CD14-positive monocyte (primary cell): ENCODE measurements at regions of chr20 and their contacts with region 1.

Region 1: GRCh38 chr20:37384683-37385174 is 38.8 kb downstream of the SRC start:
- DNase-seq: peak; percentile 73 to 81 (median 80)
- H3K4me3 ChIP-seq: peak overlapping the region; percentile 20 to 68 (median 24)
- H3K4me3 Mint-ChIP-seq: peak overlapping the region; percentile 66 to 84
- H3K27ac ChIP-seq: peak overlapping the region in 1 of 2 donors; percentile 78
- H3K27ac Mint-ChIP-seq: peak overlapping the region in 5 of 7 donors; percentile 51 to 89 (median 72)
- H3K4me1 ChIP-seq: peaks cover 35 to 44% of the 10 kb centered on the region in 2 donors
- H3K4me1 Mint-ChIP-seq: peaks cover 40% of the 10 kb centered on the region
- H3K27me3 ChIP-seq: no peaks in the 10 kb centered on the region
- H3K27me3 Mint-ChIP-seq: peaks cover 9 to 18% (median 12%) of the 10 kb centered on the region in 3 donors
- CTCF ChIP-seq: peak; percentile 93

Region 2: DNA sequence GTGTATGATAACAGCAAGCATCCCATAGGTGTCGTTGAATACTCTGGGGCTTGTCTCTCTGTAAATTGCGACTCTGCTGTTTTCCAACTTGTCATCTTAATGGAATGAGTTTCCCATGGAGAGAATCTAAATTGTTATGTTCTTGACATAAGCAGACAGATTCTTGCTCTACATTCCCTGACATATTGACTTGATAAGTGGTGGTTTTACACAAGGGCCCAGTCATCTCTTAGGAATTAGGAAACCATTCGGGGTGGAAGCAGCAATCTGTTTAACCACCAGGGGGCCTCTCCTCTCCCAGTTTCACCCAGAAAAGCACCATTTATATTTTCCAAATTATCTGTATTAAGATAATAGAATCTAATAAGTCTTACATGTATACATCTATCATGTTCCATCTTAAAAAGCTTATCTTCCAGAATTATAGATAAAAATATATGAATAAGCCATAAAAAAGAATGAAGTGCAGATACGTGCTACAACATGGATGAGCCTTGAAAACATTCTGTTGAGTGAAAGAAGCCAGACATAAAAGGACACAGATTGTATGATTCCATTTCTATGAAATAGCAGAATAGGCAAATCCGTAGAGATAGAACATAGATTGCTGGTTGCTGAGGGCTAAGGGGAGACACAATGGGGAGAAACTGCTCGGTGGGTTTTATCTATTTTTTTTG is 182.3 kb before region 1 on chr20:
- intact Hi-C with region 1: loop called in 1 of 2 experiments (anchors 5 kb)
- DNase-seq: peak in 2 of 3 donors; percentile 41 to 50
- H3K4me3 ChIP-seq: no peak overlapping the region
- H3K4me3 Mint-ChIP-seq: no peak overlapping the region
- H3K27ac ChIP-seq: no peak overlapping the region
- H3K27ac Mint-ChIP-seq: peak overlapping the region in 3 of 7 donors; percentile 40 to 57 (median 57)
- H3K4me1 ChIP-seq: no peaks in the 10 kb centered on the region
- H3K4me1 Mint-ChIP-seq: no peaks in the 10 kb centered on the region
- H3K27me3 ChIP-seq: no peaks in the 10 kb centered on the region
- H3K27me3 Mint-ChIP-seq: no peaks in the 10 kb centered on the region
- CTCF ChIP-seq: peak; percentile 81

Region 3: GRCh38 chr20:37270576-37271420 is 113.9 kb before region 1 on chr20:
- intact Hi-C with region 1: loop called (anchors 1 to 2 kb)
- DNase-seq: peak; percentile 96 to 99 (median 98)
- H3K4me3 ChIP-seq: peak overlapping the region in 1 of 3 experiments; percentile 4
- H3K4me3 Mint-ChIP-seq: peak overlapping the region; percentile 9 to 48
- H3K27ac ChIP-seq: peak overlapping the region; percentile 97 to 100
- H3K27ac Mint-ChIP-seq: peak overlapping the region; percentile 96 to 100 (median 99)
- H3K4me1 ChIP-seq: peaks cover 66% of the 10 kb centered on the region in 2 donors
- H3K4me1 Mint-ChIP-seq: peaks cover 65% of the 10 kb centered on the region
- H3K27me3 ChIP-seq: no peaks in the 10 kb centered on the region
- H3K27me3 Mint-ChIP-seq: peaks cover 0 to 1% (median 0%) of the 10 kb centered on the region in 3 donors
- CTCF ChIP-seq: no peak

Region 4: DNA sequence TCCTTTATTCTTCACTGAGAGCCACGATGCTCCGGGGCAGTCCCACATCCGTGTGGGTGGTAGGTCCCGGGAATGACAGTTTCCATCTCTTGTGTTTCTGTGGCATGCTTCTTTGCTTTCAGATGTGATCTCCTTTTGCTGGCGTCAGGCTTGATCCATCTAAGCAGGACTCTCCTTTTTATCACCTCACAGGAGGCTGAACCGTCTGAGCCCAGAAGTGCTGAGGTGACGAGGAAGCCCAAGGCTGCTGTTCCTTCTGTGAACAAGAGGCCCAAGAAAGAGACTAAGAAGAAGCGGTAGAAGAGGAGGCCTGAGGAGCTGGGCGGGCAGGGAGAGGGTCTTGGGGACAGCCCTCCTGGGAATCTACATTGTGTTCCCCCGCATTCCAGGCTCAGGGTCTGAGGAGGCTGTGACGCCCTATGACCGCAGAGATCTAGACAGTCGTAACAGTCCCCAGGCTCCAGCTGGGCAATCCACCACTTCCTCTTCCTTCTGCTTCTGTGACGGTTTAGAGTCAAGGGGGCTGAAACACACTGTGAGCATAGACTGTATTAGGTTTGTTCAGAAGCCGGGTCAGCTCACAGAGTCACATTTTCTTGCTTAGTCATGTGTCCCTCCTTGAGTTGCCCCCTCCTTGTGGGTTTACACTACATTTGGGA is 68.5 kb before region 1 on chr20:
- intact Hi-C with region 1: loop called in 1 of 2 experiments (anchors 10 kb)
- DNase-seq: peak; percentile 85 to 93 (median 86)
- H3K4me3 ChIP-seq: no peak overlapping the region
- H3K4me3 Mint-ChIP-seq: peak overlapping the region; percentile 24 to 26
- H3K27ac ChIP-seq: peak overlapping the region; percentile 60 to 90
- H3K27ac Mint-ChIP-seq: peak overlapping the region; percentile 78 to 97 (median 92)
- H3K4me1 ChIP-seq: peaks cover 43 to 44% of the 10 kb centered on the region in 2 donors
- H3K4me1 Mint-ChIP-seq: peaks cover 56% of the 10 kb centered on the region
- H3K27me3 ChIP-seq: no peaks in the 10 kb centered on the region
- H3K27me3 Mint-ChIP-seq: peaks cover 0 to 2% (median 0%) of the 10 kb centered on the region in 3 donors
- CTCF ChIP-seq: no peak

Region 5: GRCh38 chr20:37527638-37528441 is 143.1 kb after region 1 on chr20 and contains the start of gene BLCAP:
- intact Hi-C with region 1: loop called in 1 of 2 experiments (anchors 5 kb)
- DNase-seq: peak; percentile 80 to 88 (median 85)
- H3K4me3 ChIP-seq: peak within 1 kb of the TSS; percentile 96 to 99 (median 97)
- H3K4me3 Mint-ChIP-seq: peak within 1 kb of the TSS; percentile 95
- H3K27ac ChIP-seq: peak within 1 kb of the TSS; percentile 82 to 100
- H3K27ac Mint-ChIP-seq: peak within 1 kb of the TSS; percentile 100
- H3K4me1 ChIP-seq: peaks cover 30 to 40% of the 10 kb centered on the region in 2 donors
- H3K4me1 Mint-ChIP-seq: peaks cover 57% of the 10 kb centered on the region
- H3K27me3 ChIP-seq: peaks cover 0 to 3% of the 10 kb centered on the region in 2 donors
- H3K27me3 Mint-ChIP-seq: peaks cover 6 to 7% (median 6%) of the 10 kb centered on the region in 3 donors
- CTCF ChIP-seq: no peak
- polyA plus RNA-seq, gene BLCAP: 45.3 to 54.5 (median 53.3) TPM

Region 6: DNA sequence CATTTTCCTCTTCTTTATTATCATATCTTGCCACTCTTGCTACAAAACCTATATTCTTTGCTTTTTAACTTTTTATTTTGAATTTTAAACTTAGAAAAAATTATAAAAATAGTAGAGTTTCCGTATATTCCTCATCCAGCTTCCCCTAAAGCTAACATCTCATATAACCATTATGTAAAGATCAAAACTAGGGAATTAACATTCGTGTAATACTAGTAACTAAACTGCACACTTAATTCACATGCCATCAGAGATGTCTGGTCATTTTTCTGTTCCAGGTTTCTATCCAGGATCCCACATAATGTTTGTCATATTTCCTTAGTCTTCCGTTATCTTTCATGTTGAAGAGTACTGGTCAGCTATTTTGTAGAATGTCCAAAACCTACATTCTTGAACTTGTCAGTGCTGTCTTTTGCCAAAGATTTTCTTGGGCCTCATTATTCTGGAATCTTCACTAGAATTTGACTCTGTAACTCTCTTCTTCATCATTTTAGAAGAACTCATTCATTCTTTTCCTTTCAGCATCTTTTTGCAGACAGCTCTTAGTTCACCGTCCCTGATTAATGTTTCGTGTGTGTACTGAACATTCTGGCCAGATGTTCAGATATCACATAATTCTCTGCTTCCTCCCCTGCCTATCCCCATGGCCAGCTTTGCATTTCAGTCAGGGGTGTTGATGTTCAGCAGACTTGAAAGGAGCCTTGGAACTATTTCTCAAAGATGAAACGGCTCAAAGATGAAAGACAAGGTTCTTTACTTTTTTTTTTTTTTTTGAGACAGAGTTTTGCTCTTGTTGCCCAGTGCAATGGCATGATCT is 318.5 kb after region 1 on chr20:
- intact Hi-C with region 1: no loop called
- DNase-seq: no peak
- H3K4me3 ChIP-seq: no peak overlapping the region
- H3K4me3 Mint-ChIP-seq: no peak overlapping the region
- H3K27ac ChIP-seq: no peak overlapping the region
- H3K27ac Mint-ChIP-seq: no peak overlapping the region
- H3K4me1 ChIP-seq: no peaks in the 10 kb centered on the region
- H3K4me1 Mint-ChIP-seq: peaks cover 4% of the 10 kb centered on the region
- H3K27me3 ChIP-seq: no peaks in the 10 kb centered on the region
- H3K27me3 Mint-ChIP-seq: peaks cover 0 to 2% (median 1%) of the 10 kb centered on the region in 3 donors
- CTCF ChIP-seq: no peak